Activated T-helper 2 cell treated with anti-CD3 and anti-CD28 coated beads, Interferon-gamma antibody, Interleukin-2, Interleukin-4, amounts not matched to agents 10 μg/mL and 5 μg/mL and 100 μg/mL, durations not matched to agents 14 hours and 24 hours and 36 hours (primary cell): ENCODE measurements at regions of chr3 and their contacts with region 1.

Region 1: GRCh38 chr3:101827211-101828174 is 21.8 kb upstream of the NFKBIZ start:
- DNase-seq: peak; percentile 77
- H3K4me3 Mint-ChIP-seq: peak overlapping the region; percentile 93
- H3K27ac Mint-ChIP-seq: peak overlapping the region; percentile 98
- H3K4me1 Mint-ChIP-seq: peaks cover 55% of the 10 kb centered on the region
- H3K27me3 Mint-ChIP-seq: no peaks in the 10 kb centered on the region

Region 2: GRCh38 chr3:101809178-101810021 is 18.1 kb before region 1 on chr3:
- intact Hi-C with region 1: loop called (anchors 1 kb)
- DNase-seq: no peak
- H3K4me3 Mint-ChIP-seq: no peak overlapping the region
- H3K27ac Mint-ChIP-seq: peak overlapping the region; percentile 48
- H3K4me1 Mint-ChIP-seq: peaks cover 51% of the 10 kb centered on the region
- H3K27me3 Mint-ChIP-seq: no peaks in the 10 kb centered on the region

Region 3: GRCh38 chr3:101861212-101861788 is 33.8 kb after region 1 on chr3:
- intact Hi-C with region 1: loop called (anchors 5 kb)
- DNase-seq: no peak
- H3K4me3 Mint-ChIP-seq: no peak overlapping the region
- H3K27ac Mint-ChIP-seq: peak overlapping the region; percentile 72
- H3K4me1 Mint-ChIP-seq: peaks cover 47% of the 10 kb centered on the region
- H3K27me3 Mint-ChIP-seq: no peaks in the 10 kb centered on the region

Region 4: DNA sequence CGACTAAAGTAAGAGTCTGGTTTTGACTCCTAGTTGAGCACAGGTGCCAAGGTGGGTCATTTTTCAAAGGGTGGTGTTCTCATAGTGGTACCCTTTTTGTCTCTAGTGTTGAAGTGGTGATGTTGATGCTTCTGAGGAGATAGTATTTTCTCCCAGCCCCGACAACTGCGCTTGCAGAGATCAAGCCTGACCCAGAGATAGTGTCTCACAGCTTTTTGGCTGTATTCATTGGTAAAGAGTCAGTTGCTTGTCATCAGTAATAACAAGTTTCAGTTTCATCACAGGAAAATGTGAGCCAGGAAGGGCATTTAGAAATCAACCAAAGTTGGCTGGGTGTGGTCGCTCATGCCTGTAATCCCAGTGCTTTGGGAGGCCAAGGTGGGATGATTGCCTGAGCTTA is 161.1 kb after region 1 on chr3:
- intact Hi-C with region 1: loop called (anchors 1 kb)
- DNase-seq: peak; percentile 15
- H3K4me3 Mint-ChIP-seq: no peak overlapping the region
- H3K27ac Mint-ChIP-seq: peak overlapping the region; percentile 92
- H3K4me1 Mint-ChIP-seq: peaks cover 62% of the 10 kb centered on the region
- H3K27me3 Mint-ChIP-seq: peaks cover 13% of the 10 kb centered on the region